CD8-positive, alpha-beta T cell (primary cell): ENCODE measurements at regions of chr12 and their contacts with region 1.

Region 1: GRCh38 chr12:54463034-54463433 is 10.4 kb downstream of the GTSF1 start:
- DNase-seq: peak in 1 of 9 experiments; percentile 25
- ATAC-seq: no peak
- H3K4me3 ChIP-seq: no peak overlapping the region
- H3K4me3 Mint-ChIP-seq: no peak overlapping the region
- H3K27ac ChIP-seq: no peak overlapping the region
- H3K27ac Mint-ChIP-seq: no peak overlapping the region
- H3K4me1 ChIP-seq: no peaks in the 10 kb centered on the region
- H3K4me1 Mint-ChIP-seq: no peaks in the 10 kb centered on the region
- H3K27me3 ChIP-seq: no peaks in the 10 kb centered on the region
- H3K27me3 Mint-ChIP-seq: peaks cover 6% of the 10 kb centered on the region
- CTCF ChIP-seq: no peak

Region 2: GRCh38 chr12:54475537-54475936 is 12.5 kb after region 1 on chr12:
- CTCF ChIA-PET with region 1: interaction called, 4 read pairs
- POLR2A ChIA-PET with region 1: no interaction called
- intact Hi-C with region 1: loop called in 1 of 2 experiments (anchors 1 kb)
- DNase-seq: no peak
- ATAC-seq: no peak
- H3K4me3 ChIP-seq: no peak overlapping the region
- H3K4me3 Mint-ChIP-seq: no peak overlapping the region
- H3K27ac ChIP-seq: no peak overlapping the region
- H3K27ac Mint-ChIP-seq: no peak overlapping the region
- H3K4me1 ChIP-seq: no peaks in the 10 kb centered on the region
- H3K4me1 Mint-ChIP-seq: peaks cover 4% of the 10 kb centered on the region
- H3K27me3 ChIP-seq: no peaks in the 10 kb centered on the region
- H3K27me3 Mint-ChIP-seq: peaks cover 2% of the 10 kb centered on the region
- CTCF ChIP-seq: no peak